CD14-positive monocyte (primary cell): ENCODE measurements at regions of chr1 and their contacts with region 1.

Region 1: GRCh38 chr1:42756956-42757891 is 9.6 kb downstream of the P3H1 start:
- DNase-seq: peak; percentile 41 to 62 (median 54)
- H3K4me3 ChIP-seq: no peak overlapping the region
- H3K4me3 Mint-ChIP-seq: no peak overlapping the region
- H3K27ac ChIP-seq: peak overlapping the region in 1 of 2 donors; percentile 39
- H3K27ac Mint-ChIP-seq: peak overlapping the region in 6 of 7 donors; percentile 4 to 73 (median 34)
- H3K4me1 ChIP-seq: peaks cover 0 to 10% of the 10 kb centered on the region in 2 donors
- H3K4me1 Mint-ChIP-seq: peaks cover 4% of the 10 kb centered on the region
- H3K27me3 ChIP-seq: no peaks in the 10 kb centered on the region
- H3K27me3 Mint-ChIP-seq: no peaks in the 10 kb centered on the region
- CTCF ChIP-seq: peak; percentile 83

Region 2: GRCh38 chr1:42576935-42577334 is 180.3 kb before region 1 on chr1:
- intact Hi-C with region 1: loop called (anchors 5 kb)
- DNase-seq: no peak
- H3K4me3 ChIP-seq: no peak overlapping the region
- H3K4me3 Mint-ChIP-seq: no peak overlapping the region
- H3K27ac ChIP-seq: no peak overlapping the region
- H3K27ac Mint-ChIP-seq: no peak overlapping the region
- H3K4me1 ChIP-seq: no peaks in the 10 kb centered on the region
- H3K4me1 Mint-ChIP-seq: no peaks in the 10 kb centered on the region
- H3K27me3 ChIP-seq: no peaks in the 10 kb centered on the region
- H3K27me3 Mint-ChIP-seq: no peaks in the 10 kb centered on the region
- CTCF ChIP-seq: no peak